Caco-2 (cell line): ENCODE measurements at regions of chr1 and their contacts with region 1.

Region 1: DNA sequence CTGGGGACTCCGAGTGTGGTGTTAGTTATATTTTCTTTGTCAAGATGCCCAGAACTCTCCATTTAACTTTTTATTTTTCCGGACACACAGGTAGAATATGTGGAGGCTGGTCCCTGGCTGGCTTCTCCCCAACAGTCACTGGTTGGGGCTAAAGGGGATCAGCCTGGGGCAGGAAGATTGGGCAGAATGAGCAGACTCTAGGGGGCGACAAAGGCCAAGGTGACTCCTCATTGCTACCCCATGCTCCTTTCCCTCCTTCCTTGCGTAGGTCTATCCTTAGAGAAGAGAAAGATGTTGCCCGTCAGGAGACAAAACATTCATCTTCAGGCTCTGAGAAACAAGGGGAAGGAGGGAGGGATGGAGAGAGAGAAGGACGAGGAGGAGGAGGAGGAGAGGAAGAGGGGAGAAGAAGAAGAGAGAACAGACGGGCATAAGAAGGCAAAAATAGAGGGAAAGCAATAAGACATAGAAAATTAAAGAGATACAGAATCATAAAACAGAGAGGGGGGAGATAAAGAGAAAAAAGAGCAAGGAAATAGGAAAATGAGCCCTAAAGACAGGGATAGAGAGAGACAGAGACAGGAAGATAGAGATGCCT is 89.9 kb downstream of the FOXD2 start:
- DNase-seq: peak in 1 of 2 experiments; percentile 45
- H3K4me3 ChIP-seq: no peak overlapping the region
- H3K4me3 Mint-ChIP-seq: no peak overlapping the region
- H3K27ac Mint-ChIP-seq: no peak overlapping the region
- H3K4me1 ChIP-seq: no peaks in the 10 kb centered on the region
- H3K4me1 Mint-ChIP-seq: peaks cover 12% of the 10 kb centered on the region
- H3K27me3 ChIP-seq: no peaks in the 10 kb centered on the region
- H3K27me3 Mint-ChIP-seq: no peaks in the 10 kb centered on the region
- CTCF ChIP-seq: peak in 1 of 2 experiments; percentile 43

Region 2: GRCh38 chr1:47507881-47508701 is 19.7 kb before region 1 on chr1:
- CTCF ChIA-PET with region 1: no interaction called
- POLR2A ChIA-PET with region 1: no interaction called
- intact Hi-C with region 1: loop called (anchors 2 kb)
- DNase-seq: peak; percentile 71 to 73
- H3K4me3 ChIP-seq: peak overlapping the region; percentile 39
- H3K4me3 Mint-ChIP-seq: peak overlapping the region; percentile 71
- H3K27ac Mint-ChIP-seq: peak overlapping the region; percentile 39
- H3K4me1 ChIP-seq: peaks cover 15% of the 10 kb centered on the region; the same call in 1 of the 2 replicates
- H3K4me1 Mint-ChIP-seq: peaks cover 12% of the 10 kb centered on the region
- H3K27me3 ChIP-seq: no peaks in the 10 kb centered on the region
- H3K27me3 Mint-ChIP-seq: no peaks in the 10 kb centered on the region
- CTCF ChIP-seq: no peak